Activated CD8-positive, alpha-beta T cell treated with anti-CD3 and anti-CD28 coated beads for 36 hours (primary cell): ENCODE measurements at regions of chr16 and their contacts with region 1.

Region 1: GRCh38 chr16:21300309-21301167 is 22.4 kb upstream of the CRYM start:
- DNase-seq: peak; percentile 73
- ATAC-seq: peak; percentile 76
- H3K4me3 Mint-ChIP-seq: peak overlapping the region; percentile 79
- H3K27ac Mint-ChIP-seq: no peak overlapping the region
- H3K4me1 Mint-ChIP-seq: peaks cover 14% of the 10 kb centered on the region
- H3K27me3 Mint-ChIP-seq: peaks cover 44% of the 10 kb centered on the region
- CTCF ChIP-seq: no peak

Region 2: DNA sequence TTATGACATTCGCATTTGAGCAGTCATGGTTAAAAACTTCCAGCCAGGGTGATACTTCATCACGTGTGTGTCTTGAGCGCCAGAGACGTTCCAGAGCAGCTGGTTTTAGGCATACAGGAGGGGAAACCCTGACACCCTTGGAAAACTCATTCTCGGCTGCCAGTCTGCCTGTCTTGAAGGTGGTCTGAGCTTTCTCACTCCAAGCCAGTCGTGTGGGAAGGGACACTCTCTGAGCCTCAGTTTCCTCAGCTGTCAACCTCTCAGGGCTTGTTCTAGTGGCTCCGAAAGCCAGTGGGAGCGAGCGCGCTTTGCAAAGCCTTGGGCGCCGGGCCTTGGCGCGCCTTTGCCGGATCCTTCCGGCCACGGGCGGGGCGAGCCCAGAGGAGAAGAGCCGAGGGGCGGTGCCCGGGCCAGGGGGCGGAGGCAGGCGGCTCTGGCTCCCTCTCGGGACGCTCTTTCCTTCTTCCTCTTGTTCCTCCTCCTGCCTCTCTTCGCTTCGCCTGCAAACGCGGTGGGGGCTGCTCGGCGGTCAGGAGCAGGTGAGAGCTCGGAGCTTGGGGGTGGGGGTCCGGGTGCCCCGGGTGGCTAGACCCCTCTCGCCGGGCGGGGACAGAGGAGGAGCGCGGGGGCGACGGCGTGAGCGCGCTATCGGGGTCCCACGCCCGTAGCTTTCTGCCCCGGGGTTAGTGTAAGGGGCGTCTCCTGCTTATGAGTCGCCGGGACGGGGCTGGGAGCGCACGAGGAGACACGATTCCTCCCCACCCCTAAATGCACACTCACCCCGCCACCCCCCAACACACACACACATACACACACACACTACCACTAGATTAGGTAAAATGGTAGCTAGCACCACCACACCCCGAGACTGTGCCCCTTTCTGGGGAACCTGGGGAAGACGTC is 142.1 kb before region 1 on chr16 and contains the start of gene LDAF1:
- CTCF ChIA-PET with region 1: interaction called, 4 read pairs
- POLR2A ChIA-PET with region 1: no interaction called
- intact Hi-C with region 1: loop called (anchors 10 kb)
- DNase-seq: peak; percentile 84
- ATAC-seq: peak; percentile 99
- H3K4me3 Mint-ChIP-seq: peak within 1 kb of the TSS; percentile 76
- H3K27ac Mint-ChIP-seq: peak within 1 kb of the TSS; percentile 64
- H3K4me1 Mint-ChIP-seq: peaks cover 19% of the 10 kb centered on the region
- H3K27me3 Mint-ChIP-seq: no peaks in the 10 kb centered on the region
- CTCF ChIP-seq: no peak
- total RNA-seq, gene LDAF1: 10.3 to 12.6 TPM

Region 3: DNA sequence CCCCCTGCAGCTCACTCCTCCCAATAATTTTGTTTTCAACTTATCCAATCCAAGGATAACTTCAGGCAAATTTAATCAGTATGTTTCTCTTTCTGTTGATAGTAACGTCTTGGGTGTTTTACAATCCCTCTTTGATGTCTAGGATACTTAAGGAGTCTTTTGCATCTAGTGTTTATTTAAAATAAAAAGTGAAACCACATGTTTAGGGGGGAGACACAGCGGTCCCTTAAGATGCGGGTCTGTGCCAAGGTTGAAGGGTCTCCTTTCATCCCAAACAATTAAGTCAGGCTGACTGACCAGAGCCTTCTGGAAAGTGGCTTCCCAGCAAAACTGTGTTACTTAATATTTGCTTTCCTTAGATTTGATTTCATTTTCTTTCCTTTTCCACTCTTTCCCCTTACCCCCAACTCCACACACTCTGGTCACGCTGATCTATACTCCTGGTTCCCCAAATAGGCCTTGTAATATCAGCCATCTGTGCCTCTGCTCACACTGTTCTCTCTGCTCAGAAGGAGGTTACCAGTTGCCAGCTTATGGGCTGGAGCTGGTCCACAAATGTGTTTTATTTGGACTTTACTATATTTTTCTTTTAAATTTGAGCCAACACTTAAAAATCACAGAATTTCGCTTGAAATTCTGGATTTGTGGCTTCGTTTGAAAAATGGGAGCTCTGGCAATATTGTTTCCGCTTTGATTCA is 55.9 kb before region 1 on chr16:
- CTCF ChIA-PET with region 1: no interaction called
- POLR2A ChIA-PET with region 1: no interaction called
- intact Hi-C with region 1: loop called (anchors 10 kb)
- DNase-seq: no peak
- ATAC-seq: no peak
- H3K4me3 Mint-ChIP-seq: no peak overlapping the region
- H3K27ac Mint-ChIP-seq: no peak overlapping the region
- H3K4me1 Mint-ChIP-seq: no peaks in the 10 kb centered on the region
- H3K27me3 Mint-ChIP-seq: peaks cover 12% of the 10 kb centered on the region
- CTCF ChIP-seq: no peak